ENCODE measurements at regions of chr4 and their contacts with region 1.

Region 1: DNA sequence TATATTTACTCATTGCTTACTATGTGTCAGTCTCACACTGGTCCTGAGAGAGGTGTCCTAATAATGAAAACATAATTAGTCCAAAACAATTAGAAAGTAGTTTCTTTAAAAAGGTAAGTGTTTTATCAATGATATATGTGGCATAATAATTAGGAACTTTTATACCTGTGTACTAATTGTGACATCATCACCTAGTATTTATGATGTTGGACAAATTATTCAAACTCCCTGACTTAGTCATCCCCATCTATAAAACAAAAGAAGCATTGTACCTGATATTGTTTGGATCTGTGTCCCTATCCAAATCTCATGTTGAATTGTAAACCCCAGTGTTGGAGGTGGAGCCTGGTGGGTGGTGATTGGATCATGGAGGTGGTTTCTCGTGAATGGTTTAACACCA is 15.8 kb upstream of the ARHGEF38 start:
- DNase-seq: no peak
- ATAC-seq: no peak
- H3K4me3 ChIP-seq: no peak overlapping the region
- H3K27ac ChIP-seq: no peak overlapping the region
- H3K4me1 ChIP-seq: no peaks in the 10 kb centered on the region
- H3K27me3 ChIP-seq: no peaks in the 10 kb centered on the region
- CTCF ChIP-seq: no peak
- POLR2A ChIP-seq: no peak

Region 2: DNA sequence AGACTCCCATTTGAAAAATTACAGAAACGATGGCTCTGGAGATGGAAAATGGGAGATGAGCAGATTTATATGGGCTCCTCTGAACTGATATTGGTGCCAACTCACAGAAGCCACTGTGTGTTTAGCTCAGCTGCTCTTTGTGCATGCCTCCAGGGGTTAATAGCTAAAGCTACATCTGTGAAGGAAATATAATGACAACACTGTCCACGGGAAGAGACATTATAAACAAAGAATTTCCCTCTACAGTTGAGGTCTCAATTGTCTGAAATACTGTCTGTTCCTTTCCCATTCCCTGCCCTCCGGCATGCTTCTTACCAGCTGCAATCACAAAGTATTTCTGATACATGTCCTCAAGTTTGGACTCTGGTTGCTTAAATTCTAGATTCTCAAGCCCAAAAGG is 103.2 kb before region 1 on chr4:
- intact Hi-C with region 1: no loop called
- DNase-seq: no peak
- ATAC-seq: no peak
- H3K4me3 ChIP-seq: no peak overlapping the region
- H3K27ac ChIP-seq: no peak overlapping the region
- H3K4me1 ChIP-seq: no peaks in the 10 kb centered on the region
- H3K27me3 ChIP-seq: no peaks in the 10 kb centered on the region
- CTCF ChIP-seq: no peak
- POLR2A ChIP-seq: no peak

Region 3: GRCh38 chr4:105619188-105619931 is 82.8 kb after region 1 on chr4:
- intact Hi-C with region 1: loop called in 1 of 10 experiments (anchors 5 kb)
- DNase-seq: peak; percentile 51 to 77 (median 68)
- ATAC-seq: peak in 3 of 4 donors; percentile 55 to 76 (median 73)
- H3K4me3 ChIP-seq: no peak overlapping the region
- H3K27ac ChIP-seq: peak overlapping the region in 1 of 12 donors; percentile 34
- H3K4me1 ChIP-seq: peaks cover 0 to 23% (median 3%) of the 10 kb centered on the region in 12 donors
- H3K27me3 ChIP-seq: no peaks in the 10 kb centered on the region
- CTCF ChIP-seq: no peak
- POLR2A ChIP-seq: no peak

Region 4: DNA sequence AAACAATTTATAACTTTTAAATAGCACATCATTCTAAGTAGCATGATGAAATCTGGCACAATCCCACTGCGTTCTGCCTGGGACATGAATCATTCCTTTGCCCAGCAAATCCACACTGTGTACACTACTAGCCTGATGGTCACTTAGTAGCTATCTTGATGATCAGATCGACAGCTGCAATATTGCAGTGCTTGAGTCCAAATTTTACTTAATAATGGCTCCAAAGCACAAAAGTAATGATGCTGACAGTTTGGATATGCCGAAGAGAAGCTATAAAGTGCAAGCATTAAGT is 272.1 kb after region 1 on chr4:
- intact Hi-C with region 1: no loop called
- DNase-seq: peak in 1 of 5 donors; percentile 20
- ATAC-seq: peak in 2 of 4 donors; percentile 50 to 51
- H3K4me3 ChIP-seq: peak overlapping the region in 2 of 12 donors; percentile 31 to 40
- H3K27ac ChIP-seq: no peak overlapping the region
- H3K4me1 ChIP-seq: no peaks in the 10 kb centered on the region
- H3K27me3 ChIP-seq: no peaks in the 10 kb centered on the region
- CTCF ChIP-seq: no peak
- POLR2A ChIP-seq: no peak

Measured in heart left ventricle (tissue), 16 donors.